GM12878 (cell line): ENCODE measurements at regions of chr16 and their contacts with region 1.

Region 1: GRCh38 chr16:66539623-66540469 is 10.1 kb downstream of the TK2 start:
- DNase-seq: no peak
- ATAC-seq: peak; percentile 84
- H3K4me3 ChIP-seq: no peak overlapping the region
- H3K27ac ChIP-seq: no peak overlapping the region
- H3K4me1 ChIP-seq: peaks cover 9% of the 10 kb centered on the region
- H3K27me3 ChIP-seq: peaks cover 0 to 3% of the 10 kb centered on the region in 2 experiments; a peak in 2 of 4 replicates
- CTCF ChIP-seq: no peak
- EP300 ChIP-seq: peak; percentile 24 to 45; a peak in 1 of 4 replicates
- POLR2A ChIP-seq: no peak
- RAD21 ChIP-seq: no peak

Region 2: GRCh38 chr16:66511615-66512500 is 28.0 kb before region 1 on chr16:
- CTCF ChIA-PET with region 1: interaction called, 12 read pairs
- POLR2A ChIA-PET with region 1: no interaction called
- RAD21 ChIA-PET with region 1: no interaction called
- SMC1A ChIA-PET with region 1: interaction called, 19 read pairs
- in situ Hi-C with region 1: no loop called
- intact Hi-C with region 1: no loop called
- DNase-seq: no peak
- ATAC-seq: no peak
- H3K4me3 ChIP-seq: no peak overlapping the region
- H3K27ac ChIP-seq: no peak overlapping the region
- H3K4me1 ChIP-seq: peaks cover 15% of the 10 kb centered on the region
- H3K27me3 ChIP-seq: no peaks in the 10 kb centered on the region
- CTCF ChIP-seq: 0 out of 6 replicates have a peak, but pooled peaks of 1 of the 3 experiments have one; percentile 2
- EP300 ChIP-seq: no peak
- POLR2A ChIP-seq: no peak
- RAD21 ChIP-seq: no peak

Region 3: GRCh38 chr16:66516808-66517585 is 22.8 kb before region 1 on chr16:
- CTCF ChIA-PET with region 1: interaction called, 11 read pairs
- POLR2A ChIA-PET with region 1: interaction called, 6 read pairs
- RAD21 ChIA-PET with region 1: interaction called, 8 read pairs
- SMC1A ChIA-PET with region 1: interaction called, 19 read pairs
- in situ Hi-C with region 1: no loop called
- intact Hi-C with region 1: no loop called
- DNase-seq: peak; percentile 98
- ATAC-seq: peak; percentile 95
- H3K4me3 ChIP-seq: peak overlapping the region; percentile 11; the same call in 1 of the 2 replicates
- H3K27ac ChIP-seq: peak overlapping the region; percentile 84
- H3K4me1 ChIP-seq: peaks cover 50% of the 10 kb centered on the region
- H3K27me3 ChIP-seq: no peaks in the 10 kb centered on the region
- CTCF ChIP-seq: no peak
- EP300 ChIP-seq: peak; percentile 70 to 75
- POLR2A ChIP-seq: no peak; the same call in 1 of the 2 replicates
- RAD21 ChIP-seq: 0 out of 2 replicates have a peak, but pooled peaks have one; percentile 0

Region 4: DNA sequence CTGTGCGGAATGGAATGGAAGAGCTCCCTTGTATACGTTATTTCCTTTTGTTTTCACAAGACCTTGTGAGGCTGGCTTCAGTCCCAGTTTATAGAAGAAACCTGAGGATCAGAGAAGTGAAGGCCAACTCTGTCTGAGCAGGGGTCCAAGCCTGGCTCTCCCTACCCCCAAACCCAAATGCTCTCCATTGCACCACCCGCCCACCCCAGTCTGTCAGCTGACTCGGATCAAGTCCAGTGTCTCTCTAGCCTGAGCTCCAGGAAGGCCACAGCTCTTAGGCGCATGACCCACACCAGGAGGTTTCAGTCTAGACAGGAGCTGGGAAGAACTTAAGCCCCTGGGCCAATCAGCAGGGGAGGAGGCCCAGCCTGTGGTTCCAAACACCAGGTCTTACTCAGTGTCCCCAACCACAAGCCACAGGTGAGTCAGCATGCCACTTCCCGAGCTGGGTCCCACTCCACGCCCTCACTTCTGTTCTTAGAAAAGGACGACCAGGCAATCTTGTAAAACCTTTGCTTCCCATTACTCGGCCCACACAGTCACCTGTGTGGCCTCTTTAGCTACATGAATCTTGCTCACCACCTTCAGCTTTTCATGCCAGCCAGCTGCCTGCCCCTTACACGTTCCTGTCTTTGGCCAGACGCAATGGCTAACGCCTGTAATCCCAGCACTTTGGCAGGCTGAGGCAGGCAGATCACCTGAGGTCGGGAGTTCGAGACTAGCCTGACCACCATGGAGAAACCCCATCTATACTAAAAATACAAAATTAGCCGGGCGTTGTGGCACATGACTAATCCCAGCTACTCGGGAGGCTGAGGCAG is 17.7 kb before region 1 on chr16:
- CTCF ChIA-PET with region 1: interaction called, 11 read pairs
- POLR2A ChIA-PET with region 1: interaction called, 6 read pairs
- RAD21 ChIA-PET with region 1: interaction called, 8 read pairs
- SMC1A ChIA-PET with region 1: interaction called, 19 read pairs
- in situ Hi-C with region 1: no loop called
- intact Hi-C with region 1: loop called (anchors 2 kb)
- DNase-seq: peak; percentile 86
- ATAC-seq: peak; percentile 72
- H3K4me3 ChIP-seq: no peak overlapping the region
- H3K27ac ChIP-seq: peak overlapping the region; percentile 9; the same call in 1 of the 2 replicates
- H3K4me1 ChIP-seq: peaks cover 69% of the 10 kb centered on the region
- H3K27me3 ChIP-seq: no peaks in the 10 kb centered on the region
- CTCF ChIP-seq: no peak
- EP300 ChIP-seq: peak; percentile 66 to 89
- POLR2A ChIP-seq: no peak
- RAD21 ChIP-seq: no peak